ENCODE measurements at regions of chrX and their contacts with region 1.

Region 1: GRCh38 chrX:73855546-73855945 is 292.5 kb downstream of the CHIC1 start:
- DNase-seq: peak; percentile 75 to 89
- H3K4me3 ChIP-seq: no peak overlapping the region
- H3K27ac ChIP-seq: no peak overlapping the region
- H3K4me1 ChIP-seq: no peaks in the 10 kb centered on the region
- H3K27me3 ChIP-seq: no peaks in the 10 kb centered on the region
- CTCF ChIP-seq: peak in 5 of 7 experiments; percentile 42 to 84 (median 64)
- EP300 ChIP-seq: no peak
- POLR2A ChIP-seq: no peak

Region 2: GRCh38 chrX:73289039-73289438 is 566.5 kb before region 1 on chrX:
- intact Hi-C with region 1: no loop called
- DNase-seq: no peak
- H3K4me3 ChIP-seq: no peak overlapping the region
- H3K27ac ChIP-seq: no peak overlapping the region
- H3K4me1 ChIP-seq: no peaks in the 10 kb centered on the region
- H3K27me3 ChIP-seq: no peaks in the 10 kb centered on the region
- CTCF ChIP-seq: no peak
- EP300 ChIP-seq: no peak
- POLR2A ChIP-seq: no peak

Region 3: DNA sequence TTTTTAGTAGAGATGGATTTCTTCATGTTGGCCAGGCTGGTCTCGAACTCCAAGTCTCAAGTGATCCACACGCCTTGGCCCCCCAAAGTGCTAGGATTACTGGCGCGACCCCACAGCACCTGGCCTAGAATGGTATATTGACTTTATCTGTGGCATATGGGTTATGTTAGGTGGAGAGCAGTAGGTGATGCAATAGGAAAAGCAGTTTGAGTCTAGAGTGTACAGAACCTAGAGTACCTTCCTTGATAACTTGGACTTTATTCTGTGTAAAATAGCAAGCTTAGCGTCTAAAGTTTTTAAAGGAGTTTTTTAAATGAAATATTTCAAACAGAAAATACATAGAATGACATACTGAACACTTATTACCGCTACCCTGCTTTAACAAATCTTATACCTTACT is 136.5 kb after region 1 on chrX:
- intact Hi-C with region 1: no loop called
- DNase-seq: no peak
- H3K4me3 ChIP-seq: no peak overlapping the region
- H3K27ac ChIP-seq: no peak overlapping the region
- H3K4me1 ChIP-seq: peaks cover 0 to 5% (median 0%) of the 10 kb centered on the region in 4 donors
- H3K27me3 ChIP-seq: no peaks in the 10 kb centered on the region
- CTCF ChIP-seq: no peak
- EP300 ChIP-seq: no peak
- POLR2A ChIP-seq: no peak

Region 4: DNA sequence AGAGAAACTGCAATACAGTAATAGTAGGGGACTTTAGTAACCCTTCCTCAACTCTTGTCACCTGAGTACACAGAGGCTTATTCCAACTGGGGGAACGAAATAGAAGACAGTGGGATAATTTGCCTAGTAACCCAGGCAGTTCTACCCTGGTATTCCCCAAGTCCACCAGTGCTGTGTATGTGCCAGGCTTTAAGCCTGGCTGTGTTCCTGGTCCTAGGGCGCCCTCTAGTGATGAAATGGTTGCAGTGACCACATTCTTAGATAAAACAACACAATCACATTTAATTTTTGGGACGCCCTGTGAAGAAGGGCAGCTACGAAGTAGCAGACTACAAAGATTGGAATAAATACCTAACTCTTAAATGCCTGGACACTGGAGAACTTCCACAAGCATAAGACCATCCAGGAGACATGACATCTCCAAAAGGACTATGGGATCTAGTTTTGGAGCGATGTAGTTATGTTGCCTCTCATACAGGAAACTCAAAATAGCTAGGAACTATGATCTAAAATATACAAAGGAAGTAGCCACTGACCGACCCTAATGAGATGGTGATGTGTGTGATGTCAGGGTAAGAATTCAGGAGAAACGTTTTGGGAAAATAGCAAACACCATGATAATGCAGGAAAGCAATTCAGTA is 160.0 kb after region 1 on chrX:
- intact Hi-C with region 1: loop called (anchors 5 kb)
- DNase-seq: peak; percentile 73 to 89
- H3K4me3 ChIP-seq: no peak overlapping the region
- H3K27ac ChIP-seq: no peak overlapping the region
- H3K4me1 ChIP-seq: peaks cover 0 to 5% (median 0%) of the 10 kb centered on the region in 4 donors
- H3K27me3 ChIP-seq: no peaks in the 10 kb centered on the region
- CTCF ChIP-seq: peak in 5 of 7 experiments; percentile 32 to 81 (median 70)
- EP300 ChIP-seq: no peak
- POLR2A ChIP-seq: no peak

Region 5: GRCh38 chrX:74343343-74344279 is 488.1 kb after region 1 on chrX:
- intact Hi-C with region 1: loop called (anchors 10 kb)
- DNase-seq: peak; percentile 67 to 76
- H3K4me3 ChIP-seq: no peak overlapping the region
- H3K27ac ChIP-seq: peak overlapping the region in 3 of 5 donors; percentile 22 to 48 (median 46)
- H3K4me1 ChIP-seq: no peaks in the 10 kb centered on the region
- H3K27me3 ChIP-seq: peaks cover 0 to 8% (median 0%) of the 10 kb centered on the region in 3 donors
- CTCF ChIP-seq: peak in 5 of 7 experiments; percentile 17 to 57 (median 47)
- EP300 ChIP-seq: no peak
- POLR2A ChIP-seq: no peak

Region 6: DNA sequence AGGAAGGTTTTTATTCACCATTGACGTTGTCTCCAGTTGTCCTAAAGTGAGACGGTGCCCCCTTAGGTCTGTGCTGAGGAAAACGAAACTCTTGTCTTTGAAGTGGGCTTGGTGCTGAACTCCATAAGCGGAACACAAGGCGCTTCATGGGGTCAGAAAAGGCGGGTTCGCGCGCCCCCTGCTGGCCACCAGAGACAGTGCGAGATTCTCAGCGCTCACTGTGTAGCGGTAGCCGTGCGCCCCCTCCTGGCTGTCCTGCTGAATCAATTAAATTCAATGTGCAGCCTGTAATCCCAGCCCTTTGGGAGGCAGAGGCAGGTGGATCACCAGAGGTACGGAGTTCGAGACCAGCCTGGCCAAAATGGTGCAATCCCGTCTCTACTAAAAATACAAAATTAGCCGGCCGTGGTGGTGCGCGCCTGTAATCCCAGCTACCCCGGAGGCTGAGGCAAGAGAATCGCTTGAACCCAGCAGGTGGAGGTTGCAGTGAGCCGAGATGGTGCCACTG is 694.8 kb after region 1 on chrX:
- intact Hi-C with region 1: loop called (anchors 10 kb)
- DNase-seq: peak; percentile 87 to 92
- H3K4me3 ChIP-seq: no peak overlapping the region
- H3K27ac ChIP-seq: no peak overlapping the region
- H3K4me1 ChIP-seq: peaks cover 0 to 6% (median 0%) of the 10 kb centered on the region in 4 donors
- H3K27me3 ChIP-seq: no peaks in the 10 kb centered on the region
- CTCF ChIP-seq: peak in 6 of 7 experiments; percentile 28 to 98 (median 96)
- EP300 ChIP-seq: no peak
- POLR2A ChIP-seq: no peak

Measured in stomach (tissue), 19 donors.